Prostate gland (tissue), 2 donors: ENCODE measurements at regions of chr3 and their contacts with region 1.

Region 1: GRCh38 chr3:57597122-57597923 is at the start of gene ARF4:
- DNase-seq: peak; percentile 98
- H3K4me3 ChIP-seq: peak within 1 kb of the TSS; percentile 88 to 91
- H3K27ac ChIP-seq: peak within 1 kb of the TSS; percentile 97 to 98
- H3K4me1 ChIP-seq: no peaks in the 10 kb centered on the region
- H3K27me3 ChIP-seq: no peaks in the 10 kb centered on the region
- CTCF ChIP-seq: peak in 3 of 4 experiments; percentile 24 to 61 (median 46)
- POLR2A ChIP-seq: peak; percentile 99
- total RNA-seq, gene ARF4: 145 to 163 TPM

Region 2: DNA sequence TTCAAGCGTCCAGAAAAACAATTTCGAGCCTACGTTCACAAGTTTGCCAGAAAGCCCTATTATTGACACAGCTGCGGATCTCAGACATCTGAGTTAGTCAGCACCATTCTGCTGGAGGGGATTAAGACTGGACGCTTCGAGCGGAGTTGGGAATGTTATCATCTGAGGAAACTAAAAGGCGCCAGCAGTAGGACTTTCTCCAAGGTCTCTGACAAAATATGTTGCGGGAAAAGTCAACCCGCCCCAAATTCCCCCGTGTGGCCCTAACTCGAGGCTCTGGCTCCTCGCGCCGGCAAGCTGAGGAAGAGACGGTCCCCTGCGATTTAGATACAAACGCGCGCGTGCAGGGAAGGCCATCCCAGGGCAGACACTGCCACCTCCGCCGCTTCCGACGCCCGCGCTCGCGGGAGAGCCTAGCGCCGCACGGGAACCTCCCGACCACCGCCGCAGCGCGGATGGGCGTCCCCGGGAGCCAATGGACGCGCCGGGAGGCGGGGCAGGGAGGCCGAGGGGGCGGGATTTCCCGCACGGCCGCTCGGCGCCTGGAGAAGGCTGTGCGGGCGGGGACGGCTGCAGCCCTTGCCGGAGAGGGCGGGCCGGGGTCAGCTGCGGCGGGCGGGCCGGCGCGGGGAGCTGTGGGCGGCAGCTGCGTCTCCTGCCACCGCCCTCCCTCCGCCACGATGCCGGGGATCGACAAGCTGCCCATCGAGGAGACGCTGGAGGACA is 370.0 kb before region 1 on chr3 and contains the start of gene APPL1:
- intact Hi-C with region 1: loop called (anchors 5 kb)
- DNase-seq: peak; percentile 91
- H3K4me3 ChIP-seq: peak within 1 kb of the TSS; percentile 82 to 83
- H3K27ac ChIP-seq: peak within 1 kb of the TSS; percentile 88 to 93
- H3K4me1 ChIP-seq: peaks cover 3% of the 10 kb centered on the region
- H3K27me3 ChIP-seq: no peaks in the 10 kb centered on the region
- CTCF ChIP-seq: peak in 1 of 4 experiments; percentile 25
- POLR2A ChIP-seq: peak; percentile 81
- total RNA-seq, gene APPL1: 32.3 to 47.3 TPM

Region 3: DNA sequence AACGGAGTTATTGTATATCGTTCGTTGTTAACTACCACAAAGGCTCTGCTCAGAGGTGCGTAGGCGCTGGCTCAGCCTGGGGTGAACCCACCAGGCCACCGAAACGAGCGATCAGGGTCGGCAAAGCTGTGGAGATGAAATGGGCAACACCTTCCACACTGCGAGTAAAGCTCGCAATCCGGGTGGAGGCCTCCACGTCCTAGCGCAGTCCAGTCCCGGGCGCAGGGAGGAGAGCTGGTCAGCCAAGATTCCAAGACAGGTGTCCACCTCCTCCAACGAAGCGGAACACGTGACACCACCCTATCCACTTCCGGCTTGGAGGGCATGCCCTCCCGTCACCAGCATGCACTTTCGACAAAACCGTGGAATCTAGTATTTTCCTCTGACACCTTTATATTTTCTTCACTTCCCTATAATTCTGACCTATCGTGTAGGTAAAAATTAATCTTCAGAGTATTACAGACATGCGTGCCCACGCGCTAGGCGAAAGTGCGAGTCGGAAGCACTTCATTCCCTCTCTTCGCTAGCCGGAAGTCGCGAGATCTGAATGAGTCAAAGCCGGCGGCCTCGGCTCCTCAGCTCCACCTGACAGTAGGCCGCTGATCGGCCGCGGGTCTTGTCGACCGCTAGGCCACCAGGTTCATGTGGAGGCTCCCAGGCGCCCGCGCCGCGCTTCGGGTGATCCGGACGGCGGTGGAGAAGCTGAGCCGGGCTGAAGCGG is 41.4 kb before region 1 on chr3 and contains the start of gene PDE12:
- intact Hi-C with region 1: loop called (anchors 2 kb)
- DNase-seq: peak; percentile 84
- H3K4me3 ChIP-seq: peak within 1 kb of the TSS; percentile 77 to 84
- H3K27ac ChIP-seq: peak within 1 kb of the TSS; percentile 73 to 89
- H3K4me1 ChIP-seq: peaks cover 17% of the 10 kb centered on the region
- H3K27me3 ChIP-seq: no peaks in the 10 kb centered on the region
- CTCF ChIP-seq: peak in 2 of 4 experiments; percentile 7 to 17
- POLR2A ChIP-seq: peak; percentile 46
- total RNA-seq, gene PDE12: 22.8 to 23.3 TPM

Region 4: GRCh38 chr3:57692259-57693147 is 95.2 kb after region 1 on chr3 and contains the start of gene DENND6A:
- intact Hi-C with region 1: loop called (anchors 2 kb)
- DNase-seq: peak; percentile 93
- H3K4me3 ChIP-seq: peak within 1 kb of the TSS; percentile 74 to 86
- H3K27ac ChIP-seq: peak within 1 kb of the TSS; percentile 90 to 95
- H3K4me1 ChIP-seq: no peaks in the 10 kb centered on the region
- H3K27me3 ChIP-seq: no peaks in the 10 kb centered on the region
- CTCF ChIP-seq: peak in 2 of 4 experiments; percentile 14 to 15
- POLR2A ChIP-seq: peak; percentile 95
- total RNA-seq, gene DENND6A: 19.4 to 26.1 TPM

Region 5: DNA sequence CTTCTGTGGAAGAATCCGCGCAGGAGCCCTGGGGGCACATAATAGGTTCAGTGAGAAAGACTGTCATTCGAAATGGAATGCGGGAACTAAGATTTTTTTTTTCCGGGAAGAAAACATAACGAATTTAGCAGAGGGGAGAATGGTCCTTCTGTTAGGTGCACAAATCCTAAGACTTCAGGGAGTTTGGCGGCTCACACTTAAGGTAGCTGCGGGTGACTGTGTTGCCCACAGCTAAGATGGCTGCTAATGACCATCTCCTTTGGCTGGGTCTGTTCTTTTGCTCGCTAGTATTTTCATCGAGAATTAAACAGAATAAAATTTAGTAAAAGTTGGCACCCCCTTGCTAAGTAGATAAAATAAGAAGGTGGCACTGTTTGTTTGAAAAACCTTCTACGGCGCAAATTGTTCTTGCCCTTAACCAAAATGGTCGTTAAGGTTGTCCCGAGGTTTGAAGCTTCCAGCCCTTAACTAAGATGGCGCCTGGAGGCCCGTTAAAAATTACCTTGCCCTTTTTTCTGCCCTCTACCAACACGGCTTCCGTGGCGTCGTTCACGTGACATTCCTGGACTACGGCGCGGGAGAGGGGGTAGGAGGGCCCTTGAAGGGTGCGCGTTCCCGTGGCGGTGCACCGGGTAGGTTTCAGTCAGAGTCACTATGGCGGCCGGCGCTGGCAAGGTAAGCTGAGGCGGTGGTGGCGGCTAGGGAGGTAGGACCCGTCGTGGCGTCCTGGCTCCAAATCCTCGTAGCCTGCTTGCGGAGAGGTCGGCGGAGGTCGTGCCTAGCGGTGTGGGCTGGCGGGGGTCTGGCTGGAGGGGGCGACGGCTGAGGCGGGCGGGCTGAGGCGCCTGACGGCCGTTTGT is 158.6 kb after region 1 on chr3 and contains the start of gene SLMAP:
- intact Hi-C with region 1: loop called (anchors 2 kb)
- DNase-seq: peak; percentile 98
- H3K4me3 ChIP-seq: peak within 1 kb of the TSS; percentile 85 to 91
- H3K27ac ChIP-seq: peak within 1 kb of the TSS; percentile 85
- H3K4me1 ChIP-seq: no peaks in the 10 kb centered on the region
- H3K27me3 ChIP-seq: no peaks in the 10 kb centered on the region
- CTCF ChIP-seq: peak in 2 of 4 experiments; percentile 28
- POLR2A ChIP-seq: peak; percentile 76
- total RNA-seq, gene SLMAP: 76.3 to 131 TPM